ENCODE measurements at regions of chr6 and their contacts with region 1.

Region 1: GRCh38 chr6:130900913-130901312 is 73.7 kb downstream of the SMLR1 start:
- DNase-seq: no peak
- ATAC-seq: no peak
- H3K4me3 ChIP-seq: no peak overlapping the region
- H3K27ac ChIP-seq: no peak overlapping the region
- H3K4me1 ChIP-seq: no peaks in the 10 kb centered on the region
- H3K27me3 ChIP-seq: no peaks in the 10 kb centered on the region
- CTCF ChIP-seq: no peak

Region 2: DNA sequence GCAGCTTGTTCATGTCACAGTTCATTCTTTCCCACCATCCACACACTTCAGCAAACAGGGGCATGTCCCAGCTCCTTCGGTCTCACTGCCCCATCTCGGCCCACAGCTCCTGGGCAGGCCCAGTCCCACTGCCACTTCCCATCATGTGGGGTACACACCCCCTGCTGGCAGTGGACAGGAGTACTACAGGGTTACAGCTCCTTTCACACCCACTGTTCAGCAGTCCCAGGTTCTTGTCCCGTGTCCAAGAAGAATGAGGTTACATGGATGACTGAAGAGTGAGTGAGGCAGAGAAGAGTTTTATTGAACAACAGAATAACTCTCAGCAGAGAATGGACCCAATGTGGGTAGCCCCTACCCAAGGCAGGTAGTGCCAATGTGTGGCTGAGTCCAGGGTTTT is 151.5 kb before region 1 on chr6:
- intact Hi-C with region 1: no loop called
- DNase-seq: no peak
- ATAC-seq: no peak
- H3K4me3 ChIP-seq: no peak overlapping the region
- H3K27ac ChIP-seq: no peak overlapping the region
- H3K4me1 ChIP-seq: no peaks in the 10 kb centered on the region
- H3K27me3 ChIP-seq: no peaks in the 10 kb centered on the region
- CTCF ChIP-seq: no peak

Region 3: GRCh38 chr6:130858498-130859160 is 42.3 kb before region 1 on chr6:
- intact Hi-C with region 1: no loop called
- DNase-seq: no peak
- ATAC-seq: peak in 2 of 4 donors; percentile 32 to 61
- H3K4me3 ChIP-seq: no peak overlapping the region
- H3K27ac ChIP-seq: no peak overlapping the region
- H3K4me1 ChIP-seq: no peaks in the 10 kb centered on the region
- H3K27me3 ChIP-seq: no peaks in the 10 kb centered on the region
- CTCF ChIP-seq: no peak

Region 4: GRCh38 chr6:130958468-130958867 is 57.6 kb after region 1 on chr6:
- intact Hi-C with region 1: no loop called
- DNase-seq: no peak
- ATAC-seq: no peak
- H3K4me3 ChIP-seq: no peak overlapping the region
- H3K27ac ChIP-seq: no peak overlapping the region
- H3K4me1 ChIP-seq: no peaks in the 10 kb centered on the region
- H3K27me3 ChIP-seq: no peaks in the 10 kb centered on the region
- CTCF ChIP-seq: no peak

Region 5: DNA sequence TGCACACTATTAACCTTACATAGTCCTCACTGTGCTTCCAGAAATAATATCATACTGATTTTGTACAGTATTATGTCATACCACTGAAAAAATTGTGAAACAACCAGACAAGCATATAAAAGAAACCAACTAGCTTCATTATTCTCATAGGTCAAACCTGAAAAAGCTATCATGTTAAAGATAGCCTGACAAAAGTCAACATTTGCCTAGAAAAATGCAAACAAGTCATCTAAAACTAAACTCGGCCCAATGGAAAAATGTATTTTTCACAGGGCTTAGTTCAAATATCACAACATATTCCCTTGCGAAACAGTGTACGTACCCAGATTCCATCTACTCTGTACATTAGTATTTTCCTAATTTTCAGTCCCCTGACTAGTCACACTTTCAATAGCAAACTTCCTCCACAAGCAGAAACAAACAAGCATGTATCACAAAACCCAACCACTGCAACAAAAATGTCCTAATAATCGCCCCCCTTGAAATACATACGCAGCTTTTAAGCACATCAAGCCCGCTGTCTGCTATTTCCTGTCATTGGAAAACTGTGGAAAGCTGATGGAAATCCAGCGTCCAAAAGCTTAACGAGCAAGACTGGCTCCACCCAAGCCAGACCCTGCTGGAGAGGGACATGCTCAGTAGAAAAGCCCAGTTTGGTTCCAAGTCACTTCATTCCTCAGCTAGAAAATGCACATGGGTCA is 69.0 kb after region 1 on chr6:
- intact Hi-C with region 1: loop called in 1 of 3 experiments (anchors 5 kb)
- DNase-seq: no peak
- ATAC-seq: peak; percentile 48 to 71 (median 67)
- H3K4me3 ChIP-seq: peak overlapping the region in 2 of 4 donors; percentile 3 to 15
- H3K27ac ChIP-seq: peak overlapping the region in 1 of 4 donors; percentile 13
- H3K4me1 ChIP-seq: peaks cover 0 to 4% (median 0%) of the 10 kb centered on the region in 3 donors
- H3K27me3 ChIP-seq: no peaks in the 10 kb centered on the region
- CTCF ChIP-seq: no peak

Measured in pancreas (tissue), 10 donors.